Ascending aorta (tissue), 2 donors: ENCODE measurements at regions of chr1 and their contacts with region 1.

Region 1: GRCh38 chr1:247078261-247079140 is at the start of gene ZNF670:
- DNase-seq: peak; percentile 88 to 98
- H3K4me3 ChIP-seq: peak within 1 kb of the TSS; percentile 77 to 78
- H3K27ac ChIP-seq: peak within 1 kb of the TSS; percentile 71
- H3K4me1 ChIP-seq: peaks cover 0 to 10% of the 10 kb centered on the region in 2 donors
- H3K27me3 ChIP-seq: no peaks in the 10 kb centered on the region
- CTCF ChIP-seq: peak in 1 of 3 experiments; percentile 12
- total RNA-seq, gene ZNF670: not detected

Region 2: DNA sequence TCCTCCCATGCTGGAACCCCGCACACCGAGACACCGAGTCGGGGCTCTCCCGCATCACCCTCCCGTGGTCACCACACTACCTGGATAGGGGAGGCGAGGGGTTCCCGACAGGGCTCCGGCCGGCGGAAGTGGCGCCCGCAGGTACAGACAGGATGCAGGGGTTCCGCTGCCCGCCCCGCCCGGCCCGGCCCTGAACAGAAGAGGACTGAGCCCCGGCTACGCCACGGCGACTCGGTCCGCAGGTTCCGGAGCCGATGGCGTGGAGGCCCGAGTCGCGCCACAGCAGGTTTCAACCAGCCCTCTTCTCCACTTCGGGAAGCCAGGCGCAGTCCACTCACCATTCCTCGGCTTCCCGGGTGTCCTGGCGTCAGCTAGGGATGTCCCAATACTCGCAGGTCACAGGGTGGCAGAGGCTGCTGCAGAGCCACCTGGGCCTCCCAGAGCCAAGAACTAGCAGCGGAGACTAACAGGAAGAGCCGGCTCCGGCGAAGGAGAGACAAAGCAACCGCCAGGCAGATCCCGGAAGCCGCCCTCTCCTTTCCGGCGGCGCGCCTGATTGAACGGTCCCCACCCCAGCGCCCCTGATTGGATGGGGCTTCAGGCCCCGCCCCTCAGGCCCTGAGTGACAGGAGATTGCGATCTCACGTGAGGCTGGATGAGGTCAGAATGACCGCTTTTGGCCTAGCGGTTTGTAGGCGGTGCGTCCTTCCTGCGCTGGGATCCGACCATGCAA is 25.5 kb after region 1 on chr1 and contains the start of gene ZNF669:
- intact Hi-C with region 1: loop called (anchors 1 kb)
- DNase-seq: peak; percentile 92 to 99
- H3K4me3 ChIP-seq: peak within 1 kb of the TSS; percentile 63 to 75
- H3K27ac ChIP-seq: peak within 1 kb of the TSS; percentile 67 to 86
- H3K4me1 ChIP-seq: peaks cover 0 to 13% of the 10 kb centered on the region in 2 donors
- H3K27me3 ChIP-seq: no peaks in the 10 kb centered on the region
- CTCF ChIP-seq: peak in 1 of 3 experiments; percentile 10
- total RNA-seq, gene ZNF669: 0.64 TPM

Region 3: GRCh38 chr1:247331172-247331991 is 252.9 kb after region 1 on chr1 and contains the start of gene ZNF496:
- intact Hi-C with region 1: loop called (anchors 2 kb)
- DNase-seq: peak; percentile 35 to 87
- H3K4me3 ChIP-seq: peak within 1 kb of the TSS; percentile 91 to 100
- H3K27ac ChIP-seq: peak within 1 kb of the TSS; percentile 92 to 98
- H3K4me1 ChIP-seq: peaks cover 7% of the 10 kb centered on the region in 2 donors
- H3K27me3 ChIP-seq: no peaks in the 10 kb centered on the region
- CTCF ChIP-seq: no peak
- total RNA-seq, gene ZNF496: 38.5 TPM